ENCODE measurements at regions of chr7 and their contacts with region 1.

Region 1: DNA sequence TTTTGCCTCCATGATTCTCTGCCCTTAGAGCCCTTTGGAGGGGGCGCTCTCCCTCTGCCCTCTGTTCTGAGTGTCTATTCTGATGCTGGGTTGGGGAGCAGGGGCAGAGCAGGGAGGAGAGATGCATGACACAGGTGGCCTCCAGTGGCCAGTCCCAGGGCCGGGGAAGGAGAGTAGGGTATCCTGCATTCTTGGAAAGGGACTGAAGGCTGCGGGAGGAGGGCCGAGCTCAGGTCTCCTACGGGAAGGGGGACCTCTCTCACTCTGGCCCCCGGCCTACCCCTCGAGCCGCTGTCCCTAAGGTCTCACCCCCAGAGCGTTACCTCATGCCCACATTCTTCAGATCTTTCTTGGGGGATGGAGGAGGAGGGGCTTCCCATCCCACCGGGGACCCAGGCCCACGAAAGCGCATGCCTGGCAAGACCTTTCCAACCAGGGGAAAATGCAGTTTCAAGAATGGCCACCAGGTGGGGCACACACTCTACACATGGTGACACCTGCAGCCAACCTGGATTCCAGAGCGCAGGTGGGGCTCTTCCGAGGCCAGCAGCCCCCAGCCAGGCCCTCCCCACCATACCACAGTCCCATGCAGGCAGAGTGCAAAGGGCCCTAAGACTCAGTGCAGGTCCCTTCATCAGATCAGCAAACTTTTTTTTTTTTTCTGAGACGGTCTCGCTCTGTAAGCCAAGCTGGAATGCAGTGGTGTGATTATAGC is 86.4 kb downstream of the MYL10 start:
- DNase-seq: no peak
- H3K4me3 ChIP-seq: no peak overlapping the region
- H3K27me3 ChIP-seq: peaks cover 1% of the 10 kb centered on the region
- CTCF ChIP-seq: peak; percentile 87

Region 2: DNA sequence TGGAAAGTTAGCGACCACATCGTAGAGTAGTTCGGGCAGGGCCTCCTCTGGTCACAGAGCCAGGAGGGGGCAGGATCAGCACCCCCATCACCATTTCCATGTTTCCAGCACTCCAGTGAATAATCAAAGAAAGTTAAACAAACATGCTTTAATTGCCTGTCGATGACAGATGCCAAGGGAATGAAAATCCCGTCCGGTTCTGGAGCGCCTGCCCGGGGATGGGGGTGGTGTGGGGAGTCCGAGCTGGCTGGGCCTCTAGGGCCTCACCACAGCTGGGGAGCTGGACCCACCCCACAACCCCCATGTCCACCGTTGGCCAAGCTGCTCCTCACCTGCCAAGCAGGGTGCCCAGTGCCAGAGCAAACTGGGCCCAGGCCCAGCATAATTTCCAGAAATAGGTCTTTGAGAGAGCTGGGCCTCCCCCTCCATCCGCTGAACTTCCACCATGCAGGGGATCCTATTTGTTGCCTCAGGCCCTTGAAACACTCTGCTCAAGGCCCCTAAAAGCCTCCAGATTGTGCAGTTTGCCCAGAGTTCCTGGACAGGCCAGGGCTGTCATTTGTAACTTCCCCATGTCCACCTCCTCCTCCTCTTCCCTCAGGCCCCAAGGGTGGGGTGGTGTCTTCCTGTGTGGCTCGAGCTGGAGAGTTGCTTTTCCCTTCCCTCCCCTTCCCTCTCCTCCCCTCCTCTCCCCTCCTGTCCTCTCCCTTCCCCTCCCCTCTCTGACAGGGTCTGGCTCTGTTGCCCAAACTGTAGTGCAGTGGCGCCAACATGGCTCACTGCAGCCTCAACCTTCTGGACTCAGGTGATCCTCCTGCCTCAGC is 14.6 kb before region 1 on chr7:
- CTCF ChIA-PET with region 1: interaction called, 10 read pairs
- POLR2A ChIA-PET with region 1: no interaction called
- DNase-seq: peak; percentile 38
- H3K4me3 ChIP-seq: no peak overlapping the region
- H3K27me3 ChIP-seq: no peaks in the 10 kb centered on the region
- CTCF ChIP-seq: peak; percentile 24

Region 3: GRCh38 chr7:101602484-101603241 is 60.0 kb after region 1 on chr7:
- CTCF ChIA-PET with region 1: interaction called, 18 read pairs
- POLR2A ChIA-PET with region 1: no interaction called
- DNase-seq: no peak
- H3K4me3 ChIP-seq: no peak overlapping the region
- H3K27me3 ChIP-seq: no peaks in the 10 kb centered on the region
- CTCF ChIP-seq: peak; percentile 98

Region 4: DNA sequence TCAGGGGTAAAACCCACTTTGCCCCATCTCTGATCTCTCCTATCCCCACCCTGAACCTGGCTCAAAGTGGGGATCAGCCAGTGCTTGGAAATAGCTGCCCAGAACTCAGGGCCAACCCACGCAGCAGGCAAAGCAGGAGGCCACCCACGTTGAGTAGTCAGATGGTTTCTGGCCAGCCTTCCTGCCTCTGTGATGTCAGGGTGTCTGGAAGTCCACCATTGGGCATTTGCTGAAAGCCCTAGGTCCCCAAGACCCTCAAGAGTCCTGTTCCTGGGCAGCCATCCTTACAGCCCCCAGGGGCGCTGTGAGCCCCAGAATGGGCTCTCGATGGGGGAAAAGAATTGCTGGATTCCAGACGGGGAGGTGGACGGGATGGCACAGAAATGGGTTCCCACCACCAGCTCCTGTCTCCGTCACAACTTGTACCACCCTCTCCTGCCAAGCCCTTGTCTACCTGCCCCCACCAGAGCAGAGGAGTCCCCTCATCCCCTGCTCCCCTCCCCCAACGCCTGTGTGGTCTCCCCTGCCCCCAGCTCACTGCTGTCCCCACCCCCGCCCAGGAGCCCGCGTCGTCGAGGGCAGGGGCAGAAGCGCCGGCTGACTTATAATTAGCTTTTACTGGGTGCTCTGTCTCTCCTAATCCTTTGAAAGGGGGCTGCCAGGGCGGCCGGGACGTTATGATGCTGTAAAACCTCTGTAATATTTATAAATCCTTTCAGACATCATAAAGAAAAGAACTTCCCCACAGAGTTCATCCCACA is 82.5 kb after region 1 on chr7:
- CTCF ChIA-PET with region 1: no interaction called
- POLR2A ChIA-PET with region 1: no interaction called
- DNase-seq: no peak
- H3K4me3 ChIP-seq: no peak overlapping the region
- H3K27me3 ChIP-seq: no peaks in the 10 kb centered on the region
- CTCF ChIP-seq: peak; percentile 32

Region 5: DNA sequence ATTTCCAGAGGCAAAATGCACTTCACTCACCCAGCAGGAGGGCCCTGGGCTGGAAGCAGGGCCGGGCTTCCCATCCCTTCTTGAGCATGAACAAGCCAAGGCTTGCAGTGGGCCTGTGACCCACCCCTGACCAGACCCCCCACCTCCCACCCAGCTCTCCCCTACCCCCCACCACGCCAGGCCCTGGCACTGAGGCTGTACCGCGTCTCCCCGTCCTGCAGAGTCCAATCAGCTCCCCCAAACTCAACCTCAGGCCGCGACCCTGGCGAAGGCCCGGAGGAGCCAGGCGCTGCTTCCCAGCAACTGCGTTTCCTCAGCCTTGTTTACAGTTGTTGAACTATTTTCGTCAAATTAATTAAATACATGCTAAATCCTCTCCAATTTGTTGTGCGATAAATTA is 103.3 kb after region 1 on chr7:
- CTCF ChIA-PET with region 1: no interaction called
- POLR2A ChIA-PET with region 1: no interaction called
- DNase-seq: no peak
- H3K4me3 ChIP-seq: no peak overlapping the region
- H3K27me3 ChIP-seq: no peaks in the 10 kb centered on the region
- CTCF ChIP-seq: no peak

Region 6: GRCh38 chr7:101688183-101688831 is 145.6 kb after region 1 on chr7:
- CTCF ChIA-PET with region 1: interaction called, 11 read pairs
- POLR2A ChIA-PET with region 1: no interaction called
- DNase-seq: no peak
- H3K4me3 ChIP-seq: peak overlapping the region; percentile 29
- H3K27me3 ChIP-seq: no peaks in the 10 kb centered on the region; the same call in 1 of the 2 replicates
- CTCF ChIP-seq: peak; percentile 96

Region 7: GRCh38 chr7:102040569-102040968 is 497.9 kb after region 1 on chr7:
- CTCF ChIA-PET with region 1: no interaction called
- POLR2A ChIA-PET with region 1: no interaction called
- DNase-seq: no peak
- H3K4me3 ChIP-seq: no peak overlapping the region
- H3K27me3 ChIP-seq: no peaks in the 10 kb centered on the region
- CTCF ChIP-seq: no peak

Region 8: DNA sequence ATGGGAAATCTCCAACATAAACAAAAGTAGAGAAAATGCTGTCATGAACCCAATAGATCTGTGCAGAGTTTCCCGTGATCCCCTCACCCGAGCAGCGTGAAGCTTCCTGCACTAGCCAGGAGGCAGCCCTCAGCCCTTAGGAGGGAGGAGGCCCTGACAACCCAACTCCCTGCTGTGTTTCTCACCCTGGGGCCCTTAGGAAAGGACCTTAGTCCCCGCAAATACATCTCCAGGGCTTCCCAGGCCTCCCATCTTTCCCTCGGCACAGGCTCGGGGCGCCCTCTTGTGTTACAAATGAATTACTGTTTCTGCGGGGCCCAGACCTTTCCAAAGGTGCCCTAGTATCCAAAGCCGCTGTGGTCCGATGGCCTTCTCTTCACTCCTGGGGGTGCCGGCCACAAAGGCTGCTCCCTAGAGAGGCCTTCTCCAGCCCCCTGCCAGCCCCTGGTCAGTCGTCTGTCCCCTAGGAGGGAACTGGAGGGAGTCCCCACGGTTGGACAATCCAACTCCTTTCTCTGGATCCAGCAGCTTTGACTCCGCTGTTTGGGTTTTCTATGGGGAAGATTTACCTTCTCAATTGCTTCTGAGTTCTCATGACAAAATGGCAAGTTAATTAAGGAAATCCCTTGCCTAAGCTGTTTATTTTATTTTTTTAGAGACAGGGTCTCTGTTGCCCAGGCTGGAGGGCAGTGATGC is 694.1 kb after region 1 on chr7:
- CTCF ChIA-PET with region 1: interaction called, 25 read pairs
- POLR2A ChIA-PET with region 1: no interaction called
- DNase-seq: no peak
- H3K4me3 ChIP-seq: no peak overlapping the region
- H3K27me3 ChIP-seq: no peaks in the 10 kb centered on the region
- CTCF ChIP-seq: peak; percentile 83

Measured in BJ (cell line).